Mammary epithelial cell (primary cell): ENCODE measurements at regions of chr5 and their contacts with region 1.

Region 1: DNA sequence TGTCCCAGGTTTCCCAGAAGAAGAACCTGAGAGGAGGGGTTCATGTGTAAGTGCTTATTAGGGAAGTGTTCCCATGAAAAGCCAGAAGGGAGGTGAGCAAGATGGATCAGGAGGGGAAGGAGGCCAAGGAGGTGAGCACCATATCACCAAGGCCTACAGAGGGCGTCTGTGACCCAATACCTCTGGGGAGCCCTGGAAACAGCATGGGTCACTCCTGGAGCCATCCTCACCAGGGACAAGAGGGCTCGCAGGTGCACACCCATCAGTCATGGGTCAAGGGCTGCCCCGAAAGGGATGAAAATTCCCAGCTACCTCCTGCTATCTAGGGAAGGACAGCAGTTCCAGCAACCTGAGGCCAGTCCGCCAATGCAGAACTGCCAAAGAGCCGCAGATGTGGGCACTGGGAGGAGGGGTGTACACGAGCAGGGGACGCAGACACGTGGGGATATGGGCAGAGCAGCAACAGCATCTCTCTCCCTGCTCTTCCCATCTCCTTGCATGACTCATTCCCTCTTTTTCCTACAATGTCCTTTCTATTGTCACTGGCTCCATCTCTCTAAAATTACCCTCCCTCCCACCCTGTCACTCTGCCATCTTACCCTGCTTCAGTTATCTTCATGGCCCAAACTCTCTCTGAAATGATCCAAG is 167.6 kb upstream of the FSTL4 start:
- DNase-seq: no peak
- H3K4me3 ChIP-seq: no peak overlapping the region
- H3K27ac ChIP-seq: no peak overlapping the region
- H3K4me1 ChIP-seq: no peaks in the 10 kb centered on the region
- H3K27me3 ChIP-seq: peaks cover 2% of the 10 kb centered on the region
- CTCF ChIP-seq: no peak

Region 2: GRCh38 chr5:133746834-133747233 is 33.1 kb before region 1 on chr5:
- CTCF ChIA-PET with region 1: no interaction called
- dilution Hi-C with region 1: loop called (anchors 5 kb)
- in situ Hi-C with region 1: no loop called
- intact Hi-C with region 1: no loop called
- DNase-seq: no peak
- H3K4me3 ChIP-seq: no peak overlapping the region
- H3K27ac ChIP-seq: no peak overlapping the region
- H3K4me1 ChIP-seq: no peaks in the 10 kb centered on the region
- H3K27me3 ChIP-seq: no peaks in the 10 kb centered on the region
- CTCF ChIP-seq: peak in 1 of 2 donors; percentile 14